WTC11 (cell line): ENCODE measurements at regions of chr10 and their contacts with region 1.

Region 1: DNA sequence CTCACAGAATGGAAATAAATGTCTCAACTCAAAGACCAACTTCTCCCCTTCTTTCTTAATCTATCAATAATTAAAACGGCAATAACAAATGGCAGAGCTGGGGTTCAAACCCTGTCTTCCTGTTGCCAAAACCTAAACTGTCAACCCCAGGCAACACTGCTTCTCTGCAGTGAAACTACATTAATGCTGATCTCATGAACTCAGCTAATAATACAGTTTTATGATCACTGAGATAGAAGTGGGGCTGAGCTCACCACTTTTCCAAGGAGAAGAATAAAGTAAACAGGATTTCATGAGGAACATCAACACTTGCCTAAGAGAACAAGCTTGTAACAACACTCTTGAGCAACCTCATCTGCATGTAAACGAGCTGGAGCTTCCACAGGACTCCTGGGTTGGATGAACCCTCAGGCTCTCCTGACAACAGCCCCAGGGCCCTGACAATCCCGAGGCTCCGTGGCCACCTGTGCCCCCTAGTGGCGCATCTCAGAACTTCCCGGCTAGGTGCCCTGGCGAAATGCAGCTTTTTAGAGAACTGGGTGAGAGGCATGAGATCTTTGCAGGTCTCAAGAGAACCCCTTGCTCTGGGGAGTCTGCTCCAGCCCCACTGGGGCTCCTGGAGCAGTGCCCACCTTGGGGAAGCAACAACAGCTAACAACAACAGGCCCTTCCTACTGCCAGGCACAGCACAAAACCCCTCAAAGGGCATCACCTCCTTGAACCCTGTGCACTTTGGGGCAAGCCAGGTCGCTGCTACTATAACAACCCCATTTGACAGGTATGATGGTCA is 169.3 kb downstream of the SH3PXD2A start:
- DNase-seq: peak; percentile 85
- ATAC-seq: peak; percentile 78
- H3K4me3 Mint-ChIP-seq: no peak overlapping the region
- H3K27ac Mint-ChIP-seq: 0 out of 2 replicates have a peak overlapping the region, but pooled peaks have one; percentile 3
- H3K4me1 Mint-ChIP-seq: peaks cover 18% of the 10 kb centered on the region
- H3K27me3 Mint-ChIP-seq: peaks cover 4% of the 10 kb centered on the region
- CTCF ChIP-seq: peak; percentile 95

Region 2: DNA sequence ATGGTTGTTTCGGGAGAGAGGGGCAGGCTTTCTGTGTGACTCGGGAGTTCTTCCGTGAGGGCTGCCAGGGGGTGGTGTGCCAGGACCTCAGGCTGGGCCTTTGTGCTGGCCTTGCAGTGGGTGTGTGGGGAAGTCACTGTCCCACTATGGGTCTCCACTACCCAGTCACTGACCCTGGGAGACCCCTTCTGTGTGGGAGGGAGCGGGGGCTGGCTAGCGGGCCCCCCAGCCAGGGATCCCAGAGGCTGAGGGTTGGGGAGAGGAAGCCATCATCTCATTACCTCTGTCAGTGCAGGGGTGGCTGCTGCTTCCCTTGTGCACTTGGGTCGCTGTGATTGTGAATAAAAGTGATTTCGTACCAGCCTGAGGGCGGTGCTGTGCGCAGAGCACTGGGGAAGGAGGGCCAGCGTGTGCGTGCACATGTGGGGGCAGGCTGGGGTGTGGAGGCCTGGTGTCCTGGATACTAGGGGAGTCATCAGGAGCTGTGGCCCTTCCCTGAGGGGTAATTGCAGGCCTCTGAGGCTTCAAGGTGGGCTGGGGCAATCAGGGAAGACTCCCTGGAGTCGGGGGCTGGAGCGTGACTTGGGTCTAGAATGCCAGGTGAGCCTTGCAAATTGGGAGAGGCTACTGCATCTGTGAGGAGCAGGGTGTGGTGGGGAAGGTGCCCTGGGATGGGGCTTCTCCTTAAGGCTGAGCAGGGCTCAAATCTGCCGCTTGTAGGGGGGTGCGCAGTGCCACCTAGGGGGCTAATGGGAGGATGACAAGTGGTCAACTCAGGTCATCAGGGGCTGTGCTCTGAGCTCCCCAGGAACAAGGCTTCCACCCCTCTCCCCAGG is 93.7 kb before region 1 on chr10:
- CTCF ChIA-PET with region 1: interaction called, 105 read pairs
- POLR2A ChIA-PET with region 1: no interaction called
- DNase-seq: peak; percentile 79
- ATAC-seq: peak; percentile 92
- H3K4me3 Mint-ChIP-seq: no peak overlapping the region
- H3K27ac Mint-ChIP-seq: no peak overlapping the region
- H3K4me1 Mint-ChIP-seq: peaks cover 5% of the 10 kb centered on the region
- H3K27me3 Mint-ChIP-seq: peaks cover 4% of the 10 kb centered on the region; the same call in 1 of the 2 replicates
- CTCF ChIP-seq: peak; percentile 77

Region 3: DNA sequence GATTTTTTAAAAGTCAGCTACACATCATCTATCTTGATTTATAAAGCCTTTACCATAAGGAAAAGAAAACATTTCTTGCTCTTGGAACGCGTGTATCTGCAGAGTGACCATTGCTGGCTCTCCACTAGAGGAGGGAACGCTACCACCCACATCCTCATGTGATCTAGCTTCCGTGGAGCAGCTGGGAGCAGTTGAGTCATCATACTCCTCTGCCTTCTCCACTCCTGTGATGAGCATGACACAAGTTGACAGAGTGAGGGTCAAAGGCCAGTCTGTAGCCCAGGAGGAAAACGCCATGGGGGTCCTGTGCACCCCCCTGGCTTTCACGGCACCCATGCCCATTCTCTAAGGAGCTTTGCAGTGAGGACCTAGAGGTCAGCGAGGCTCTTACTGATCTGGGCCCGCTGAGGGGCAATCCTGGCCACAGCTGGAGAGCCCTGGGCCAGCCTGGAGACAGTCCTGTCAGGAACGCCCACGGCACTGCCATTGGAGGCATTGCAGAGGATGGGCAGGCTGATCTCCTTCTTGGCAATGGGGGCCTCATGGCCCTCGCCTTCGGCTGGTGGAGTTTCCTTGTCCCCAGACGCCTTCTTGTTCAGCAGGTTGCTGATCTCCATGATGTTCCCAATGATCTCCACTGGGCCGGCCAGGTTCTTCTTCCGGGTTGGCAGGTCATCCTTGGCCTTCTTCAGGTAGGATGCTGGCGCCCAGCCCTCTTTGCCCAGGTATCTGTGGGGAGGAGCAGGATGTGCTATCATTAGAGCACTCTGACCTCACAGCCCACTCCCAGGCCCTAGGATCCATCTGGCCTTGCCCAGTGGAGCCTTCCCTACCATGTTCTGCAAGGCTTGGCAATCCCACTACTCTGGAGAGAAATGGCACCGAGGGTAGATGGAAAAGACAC is 73.4 kb before region 1 on chr10:
- CTCF ChIA-PET with region 1: interaction called, 27 read pairs
- POLR2A ChIA-PET with region 1: no interaction called
- DNase-seq: no peak
- ATAC-seq: no peak
- H3K4me3 Mint-ChIP-seq: no peak overlapping the region
- H3K27ac Mint-ChIP-seq: no peak overlapping the region
- H3K4me1 Mint-ChIP-seq: peaks cover 10% of the 10 kb centered on the region
- H3K27me3 Mint-ChIP-seq: no peaks in the 10 kb centered on the region
- CTCF ChIP-seq: no peak

Region 4: GRCh38 chr10:103648921-103649532 is 37.0 kb before region 1 on chr10:
- CTCF ChIA-PET with region 1: interaction called, 33 read pairs
- POLR2A ChIA-PET with region 1: no interaction called
- DNase-seq: no peak
- ATAC-seq: no peak
- H3K4me3 Mint-ChIP-seq: no peak overlapping the region
- H3K27ac Mint-ChIP-seq: peak overlapping the region; percentile 29; the same call in 1 of the 2 replicates
- H3K4me1 Mint-ChIP-seq: peaks cover 62% of the 10 kb centered on the region
- H3K27me3 Mint-ChIP-seq: no peaks in the 10 kb centered on the region
- CTCF ChIP-seq: no peak

Region 5: DNA sequence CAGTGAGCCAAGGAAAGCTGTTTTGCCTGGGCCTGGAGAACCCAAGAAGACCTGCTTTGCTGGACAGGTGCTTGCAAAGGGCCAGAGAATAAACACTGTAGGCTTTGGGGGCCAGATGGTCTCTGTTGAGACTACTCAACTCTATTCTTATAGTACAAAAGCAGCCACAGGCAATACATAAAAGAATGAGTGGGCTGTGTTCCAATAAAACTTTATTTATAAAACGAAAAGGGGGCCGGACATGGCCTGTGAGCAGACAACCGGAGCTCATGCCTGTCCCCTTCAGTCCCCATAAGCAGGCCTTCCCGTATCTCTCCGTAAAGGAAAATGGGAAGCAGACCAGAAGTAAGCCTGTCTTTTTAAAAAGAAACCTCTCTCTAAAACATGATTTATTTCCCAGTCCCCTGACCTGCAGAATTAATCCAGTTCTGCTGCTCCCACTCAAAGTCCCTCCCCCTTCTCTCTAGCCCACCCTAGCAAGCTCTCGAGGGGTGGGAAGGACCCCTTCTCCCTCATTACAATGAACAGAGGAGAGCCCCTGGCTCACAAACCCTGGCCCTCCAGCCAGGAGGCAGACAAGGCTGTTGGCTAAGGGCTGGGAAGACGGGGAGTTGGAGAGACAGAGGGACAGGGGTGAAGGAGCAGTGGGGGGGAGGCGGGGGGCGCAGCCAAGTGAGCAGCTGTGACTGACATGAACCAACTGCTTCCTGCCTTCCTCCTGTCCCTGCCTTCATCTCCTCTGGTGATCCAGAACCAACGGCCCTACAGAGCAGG is 14.8 kb before region 1 on chr10:
- CTCF ChIA-PET with region 1: interaction called, 50 read pairs
- POLR2A ChIA-PET with region 1: no interaction called
- DNase-seq: no peak
- ATAC-seq: no peak
- H3K4me3 Mint-ChIP-seq: no peak overlapping the region
- H3K27ac Mint-ChIP-seq: peak overlapping the region; percentile 57; the same call in 1 of the 2 replicates
- H3K4me1 Mint-ChIP-seq: peaks cover 34% of the 10 kb centered on the region
- H3K27me3 Mint-ChIP-seq: no peaks in the 10 kb centered on the region
- CTCF ChIP-seq: no peak

Region 6: GRCh38 chr10:103845972-103846371 is 159.9 kb after region 1 on chr10:
- CTCF ChIA-PET with region 1: interaction called, 11 read pairs
- POLR2A ChIA-PET with region 1: no interaction called
- DNase-seq: no peak
- ATAC-seq: no peak; the same call in 1 of the 2 replicates
- H3K4me3 Mint-ChIP-seq: no peak overlapping the region
- H3K27ac Mint-ChIP-seq: no peak overlapping the region
- H3K4me1 Mint-ChIP-seq: peaks cover 46% of the 10 kb centered on the region
- H3K27me3 Mint-ChIP-seq: no peaks in the 10 kb centered on the region
- CTCF ChIP-seq: no peak

Region 7: GRCh38 chr10:104274762-104275721 is 589.0 kb after region 1 on chr10:
- CTCF ChIA-PET with region 1: no interaction called
- POLR2A ChIA-PET with region 1: no interaction called
- DNase-seq: peak; percentile 79
- ATAC-seq: peak; percentile 94
- H3K4me3 Mint-ChIP-seq: peak overlapping the region; percentile 70
- H3K27ac Mint-ChIP-seq: no peak overlapping the region
- H3K4me1 Mint-ChIP-seq: peaks cover 10% of the 10 kb centered on the region
- H3K27me3 Mint-ChIP-seq: peaks cover 12% of the 10 kb centered on the region
- CTCF ChIP-seq: peak; percentile 71